ENCODE measurements at regions of chr22 and their contacts with region 1.

Region 1: DNA sequence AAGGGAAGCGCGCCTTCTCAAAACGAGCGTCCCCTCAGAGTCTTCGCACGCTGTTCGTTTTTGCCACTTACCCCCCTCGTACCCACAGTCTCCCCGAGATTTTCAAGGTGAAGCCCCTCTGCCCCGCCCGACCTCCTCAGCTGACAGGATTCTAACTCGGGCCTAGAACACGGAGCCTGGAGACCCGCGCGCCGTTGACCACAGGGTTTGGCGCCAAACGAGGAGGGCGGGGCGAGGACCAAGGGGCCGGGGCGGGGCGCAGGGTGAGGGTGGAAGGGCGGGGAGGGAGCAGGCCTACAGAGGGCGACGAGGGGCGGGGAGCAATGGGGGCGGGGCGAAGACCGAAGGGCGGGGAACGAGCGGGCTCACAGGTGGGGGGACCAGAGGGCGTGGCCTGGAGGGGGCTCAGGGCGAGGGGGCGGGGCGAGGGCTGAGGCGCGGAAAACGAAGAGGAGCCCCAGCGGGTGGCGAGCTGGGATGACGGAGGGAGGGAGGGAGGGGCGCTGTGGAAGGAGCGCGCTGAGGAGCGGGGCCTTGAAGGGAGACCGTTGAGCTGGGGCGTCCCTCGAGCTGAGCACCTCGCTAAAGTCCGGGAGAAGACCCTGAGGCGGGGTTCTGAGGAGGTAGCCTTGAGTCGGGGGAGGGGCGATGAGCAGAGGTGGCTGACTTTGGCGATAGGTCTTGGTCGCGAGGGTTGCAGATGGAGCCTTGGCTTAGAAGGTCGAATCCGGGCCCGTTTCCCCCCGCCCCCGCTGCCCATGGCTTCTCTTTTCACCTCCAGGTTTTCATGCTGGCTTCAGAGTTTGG is at the start of gene DMC1:
- DNase-seq: peak; percentile 64 to 88 (median 76)
- H3K4me3 ChIP-seq: peak within 1 kb of the TSS; percentile 49 to 84 (median 68)
- H3K27ac ChIP-seq: peak within 1 kb of the TSS; percentile 14 to 95 (median 84)
- H3K27me3 ChIP-seq: no peaks in the 10 kb centered on the region
- CTCF ChIP-seq: peak in 2 of 56 donors; percentile 15 to 34
- total RNA-seq, gene DMC1: 0.23 to 4.2 (median 1.6) TPM in 116 of 120 experiments, not detected in the others

Region 2: DNA sequence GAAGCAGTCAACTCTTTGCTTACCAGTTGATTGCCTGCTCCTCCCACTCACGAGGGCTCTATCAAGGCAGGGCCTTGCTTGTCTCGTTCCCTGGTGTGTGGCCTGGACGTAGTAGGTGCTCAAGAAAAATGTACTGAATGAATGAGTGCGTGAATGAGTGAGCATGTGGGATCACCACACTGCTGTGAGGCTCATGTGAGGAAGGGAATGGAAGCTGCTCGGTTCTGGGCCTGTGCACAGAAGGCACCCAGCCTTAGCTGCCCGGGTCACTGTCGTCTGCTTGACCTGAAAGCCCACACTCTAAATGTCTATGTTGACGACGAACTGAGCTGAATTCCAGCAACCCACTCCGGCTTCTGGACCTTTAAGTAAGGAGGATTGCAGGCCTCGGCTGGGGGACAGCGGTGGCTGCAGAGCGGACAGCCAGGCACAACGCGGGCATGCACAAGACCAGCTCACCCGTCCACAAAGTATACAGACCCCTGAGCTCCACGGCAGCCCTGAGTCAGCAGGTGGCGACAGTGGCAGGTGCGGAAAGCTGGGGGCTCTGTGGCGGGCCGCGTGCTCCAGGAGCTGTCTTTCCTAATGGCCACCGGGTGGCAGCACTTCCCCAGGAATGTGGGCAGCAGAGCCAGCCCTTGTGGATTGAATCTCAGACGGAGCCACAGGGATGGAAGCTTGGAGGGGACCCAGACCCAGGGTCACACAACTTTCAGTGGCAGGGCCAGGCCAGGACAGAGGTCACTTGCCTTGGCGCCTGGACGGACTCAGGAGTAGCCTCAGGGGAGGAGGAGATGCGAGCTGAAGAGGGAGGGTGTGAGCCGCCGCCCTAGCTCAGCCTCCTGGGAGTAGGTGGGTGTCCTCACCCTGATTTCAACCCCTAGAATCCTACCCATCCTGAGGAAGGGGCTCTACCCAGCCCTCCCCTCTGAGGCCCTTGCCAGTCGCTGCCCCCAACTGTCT is 518.0 kb before region 1 on chr22:
- intact Hi-C with region 1: loop called in 1 of 2 experiments (anchors 2 kb)
- DNase-seq: peak; percentile 84 to 95 (median 88)
- H3K4me3 ChIP-seq: peak overlapping the region in 1 of 59 donors; percentile 7
- H3K27ac ChIP-seq: peak overlapping the region; percentile 40 to 100 (median 96)
- H3K27me3 ChIP-seq: no peaks in the 10 kb centered on the region
- CTCF ChIP-seq: peak; percentile 72 to 99 (median 96)

Region 3: DNA sequence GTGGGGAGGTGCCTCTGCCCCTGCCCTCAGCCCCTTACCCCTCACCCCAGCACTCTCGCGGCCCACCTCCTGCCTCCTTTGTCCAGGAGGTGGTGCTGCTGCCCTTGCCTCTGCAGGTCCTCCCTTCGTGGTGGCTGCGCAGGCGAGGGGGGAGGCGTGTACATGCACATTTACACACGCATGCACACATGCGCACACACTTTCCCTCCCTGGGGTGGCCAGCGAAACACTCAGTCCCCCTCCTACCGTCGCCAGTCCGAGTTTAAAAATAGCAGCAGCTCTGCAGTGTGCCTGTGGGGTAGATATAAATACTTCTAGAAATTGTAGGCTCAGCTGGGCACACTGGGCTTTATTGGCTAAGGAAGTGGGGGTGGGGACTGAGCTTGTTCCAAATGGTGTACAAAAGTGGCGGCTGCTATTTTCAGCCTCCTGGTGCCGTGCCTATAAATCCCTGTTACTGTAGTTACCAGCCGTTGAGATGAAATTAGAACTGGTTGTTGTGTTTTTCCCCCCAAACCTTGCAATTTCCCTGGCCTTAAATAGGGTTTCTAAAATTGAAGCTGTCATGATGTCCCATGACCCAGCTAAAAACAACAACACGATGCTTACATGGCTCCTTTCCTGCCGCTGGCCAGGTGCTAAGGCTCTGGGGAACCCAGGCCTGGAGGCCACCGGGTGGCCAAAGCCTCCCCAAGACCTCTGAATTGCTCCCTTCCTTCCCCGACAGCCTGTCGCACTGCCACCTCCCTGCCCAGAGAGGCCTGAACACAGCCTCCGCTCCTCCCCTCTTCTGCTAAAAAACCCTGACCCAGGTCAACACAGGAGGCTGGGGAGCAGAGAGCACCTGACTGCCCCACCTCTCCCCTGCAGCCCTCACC is 500.6 kb before region 1 on chr22:
- intact Hi-C with region 1: loop called (anchors 2 to 5 kb)
- DNase-seq: peak; percentile 77 to 93 (median 88)
- H3K4me3 ChIP-seq: peak overlapping the region in 12 of 59 donors; percentile 2 to 43 (median 15)
- H3K27ac ChIP-seq: peak overlapping the region; percentile 70 to 100 (median 97)
- H3K27me3 ChIP-seq: no peaks in the 10 kb centered on the region
- CTCF ChIP-seq: peak in 55 of 56 donors; percentile 58 to 92 (median 78)

Region 4: GRCh38 chr22:38403812-38404211 is 166.4 kb before region 1 on chr22:
- intact Hi-C with region 1: loop called in 1 of 2 experiments (anchors 5 kb)
- DNase-seq: peak in 2 of 10 donors; percentile 46 to 47
- H3K4me3 ChIP-seq: peak overlapping the region in 6 of 59 donors; percentile 1 to 24 (median 16)
- H3K27ac ChIP-seq: no peak overlapping the region
- H3K27me3 ChIP-seq: no peaks in the 10 kb centered on the region
- CTCF ChIP-seq: no peak

Region 5: DNA sequence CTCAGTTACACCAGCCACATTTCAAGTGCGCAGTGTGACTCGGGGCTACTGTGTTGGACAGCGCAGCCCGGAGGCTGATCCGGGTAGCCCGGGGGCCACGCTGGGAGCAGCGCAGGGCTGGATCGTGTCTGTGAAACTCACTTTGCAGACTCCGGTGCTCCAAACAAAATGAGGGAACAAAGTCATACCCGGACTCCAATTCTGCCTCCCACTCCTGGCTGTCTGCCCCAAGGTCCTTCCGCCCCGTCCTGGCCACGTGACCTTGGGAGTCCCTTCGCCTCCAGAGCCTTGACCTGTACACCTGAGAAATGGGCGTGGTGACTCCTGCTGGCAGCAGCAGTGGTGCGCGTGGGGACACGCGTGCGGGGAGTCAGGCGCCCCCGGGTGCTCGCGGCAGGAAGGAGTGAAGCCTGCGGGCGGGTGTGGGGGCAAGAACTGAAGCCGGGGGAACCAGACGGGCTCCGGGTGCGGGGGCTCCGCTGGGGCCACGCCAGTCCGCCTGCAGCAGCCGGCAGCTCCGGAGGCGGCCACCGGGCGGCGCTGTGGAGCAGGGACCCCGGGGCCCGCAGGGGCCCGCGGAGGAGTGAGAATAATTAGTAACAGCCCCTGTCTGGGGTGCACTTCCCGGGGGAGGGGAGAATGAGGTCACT is 157.6 kb before region 1 on chr22:
- intact Hi-C with region 1: loop called in 1 of 2 experiments (anchors 5 kb)
- DNase-seq: peak in 5 of 10 donors; percentile 11 to 54 (median 31)
- H3K4me3 ChIP-seq: peak overlapping the region; percentile 22 to 63 (median 48)
- H3K27ac ChIP-seq: peak overlapping the region in 2 of 59 donors; percentile 3 to 44
- H3K27me3 ChIP-seq: no peaks in the 10 kb centered on the region
- CTCF ChIP-seq: peak; percentile 51 to 92 (median 81)

Region 6: GRCh38 chr22:38506118-38506962 is 63.8 kb before region 1 on chr22 and contains the start of gene DDX17:
- intact Hi-C with region 1: loop called (anchors 1 to 2 kb)
- DNase-seq: peak; percentile 87 to 98 (median 96)
- H3K4me3 ChIP-seq: peak within 1 kb of the TSS; percentile 55 to 98 (median 89)
- H3K27ac ChIP-seq: peak within 1 kb of the TSS; percentile 98 to 100 (median 100)
- H3K27me3 ChIP-seq: no peaks in the 10 kb centered on the region
- CTCF ChIP-seq: peak in 13 of 56 donors; percentile 4 to 46 (median 17)
- total RNA-seq, gene DDX17: 359 to 670 (median 471) TPM

Region 7: DNA sequence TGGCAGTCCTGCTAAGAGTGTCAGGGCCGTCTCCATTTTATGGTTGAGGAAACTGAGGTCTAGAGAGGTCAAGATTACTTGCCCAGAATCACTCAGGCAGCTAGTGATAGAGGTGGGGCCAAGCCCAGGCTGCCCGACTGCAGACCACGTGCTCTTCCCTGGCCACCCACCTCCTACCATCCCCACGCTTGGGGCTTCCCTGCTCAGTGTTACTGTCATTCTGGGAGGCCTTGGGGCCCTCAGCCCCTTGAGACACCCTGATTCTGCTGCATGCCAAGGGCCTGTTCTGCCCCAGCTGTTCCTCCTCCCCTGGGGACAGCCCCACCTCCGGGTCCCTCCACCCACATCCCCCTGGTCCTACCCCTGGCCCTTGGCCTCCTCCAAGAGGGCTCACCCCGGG is 812.2 kb after region 1 on chr22:
- intact Hi-C with region 1: no loop called
- DNase-seq: no peak
- H3K4me3 ChIP-seq: no peak overlapping the region
- H3K27ac ChIP-seq: peak overlapping the region in 1 of 59 donors; percentile 68
- H3K27me3 ChIP-seq: no peaks in the 10 kb centered on the region
- CTCF ChIP-seq: no peak

Measured in dorsolateral prefrontal cortex (tissue), 120 donors.